ENCODE measurements at regions of chr7 and their contacts with region 1.

Region 1: DNA sequence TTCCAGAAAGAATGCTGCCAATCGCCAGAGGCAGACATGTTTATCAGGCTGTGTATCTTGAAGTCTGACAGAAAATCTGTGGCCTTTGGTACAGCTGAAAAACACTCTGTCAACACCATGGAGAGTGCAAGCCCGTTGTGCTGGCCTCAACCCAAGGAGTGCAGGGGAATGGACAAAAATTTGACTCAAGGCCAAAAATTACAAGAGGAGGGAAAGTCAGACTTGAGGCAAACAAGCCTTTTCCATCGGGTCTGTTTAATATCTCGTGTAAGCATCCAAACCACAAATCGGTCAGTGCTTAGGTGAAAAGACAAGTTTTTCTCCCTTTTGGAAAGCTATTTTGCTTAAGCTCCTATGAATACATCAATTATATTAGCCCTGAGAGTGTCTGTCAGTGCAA is 305.3 kb upstream of the NFE2L3 start:
- DNase-seq: peak; percentile 64 to 95

Region 2: DNA sequence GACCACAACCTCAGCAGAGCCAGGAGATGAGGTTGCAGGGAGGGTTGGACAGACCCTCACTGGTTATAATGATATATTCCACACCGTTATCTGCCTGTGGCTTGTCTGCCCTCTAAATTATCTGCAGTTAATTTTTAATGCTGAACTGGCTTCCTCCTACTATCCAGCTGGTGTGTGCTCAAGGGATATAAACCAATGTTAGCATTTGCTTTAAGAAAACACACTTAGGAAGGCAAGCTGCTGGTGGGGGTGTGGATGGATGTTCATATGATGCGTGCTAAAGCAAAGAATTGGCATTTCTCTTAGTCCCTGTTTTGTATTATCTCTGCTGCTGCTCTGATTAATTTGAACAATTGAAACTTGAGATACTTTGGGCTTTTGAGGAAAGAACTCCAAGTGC is 486.3 kb before region 1 on chr7:
- in situ Hi-C with region 1: no loop called
- DNase-seq: no peak

Region 3: DNA sequence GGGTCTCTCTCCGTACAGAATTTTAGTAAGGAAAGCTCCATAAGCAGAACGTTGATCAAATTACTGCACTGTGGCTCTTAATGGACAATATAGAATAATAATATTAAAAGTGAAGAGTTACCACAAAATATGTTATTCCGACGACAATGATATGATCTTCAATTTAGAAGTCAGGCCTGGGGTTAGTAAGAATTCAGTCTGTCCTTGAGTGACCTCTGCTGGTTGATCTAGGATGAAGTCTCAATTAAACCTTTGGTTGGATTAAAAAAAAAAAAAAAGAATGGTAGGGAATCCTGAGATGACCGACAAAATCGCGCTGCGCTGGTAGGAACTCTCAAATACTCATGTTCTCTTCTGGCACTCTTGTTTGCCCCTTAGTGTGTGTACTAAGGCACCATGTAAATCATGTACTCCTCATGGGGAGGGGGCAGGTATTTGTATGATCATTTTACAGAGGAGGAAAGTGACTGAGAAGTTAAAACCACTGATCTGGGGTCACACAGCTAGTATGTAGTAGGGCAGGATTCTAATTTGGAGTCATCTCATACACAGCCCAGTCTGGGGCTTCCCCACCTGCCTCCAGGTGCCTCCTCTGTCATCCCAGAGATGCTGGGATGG is 457.1 kb before region 1 on chr7:
- in situ Hi-C with region 1: loop called (anchors 25 kb)
- DNase-seq: peak; percentile 11 to 77

Region 4: DNA sequence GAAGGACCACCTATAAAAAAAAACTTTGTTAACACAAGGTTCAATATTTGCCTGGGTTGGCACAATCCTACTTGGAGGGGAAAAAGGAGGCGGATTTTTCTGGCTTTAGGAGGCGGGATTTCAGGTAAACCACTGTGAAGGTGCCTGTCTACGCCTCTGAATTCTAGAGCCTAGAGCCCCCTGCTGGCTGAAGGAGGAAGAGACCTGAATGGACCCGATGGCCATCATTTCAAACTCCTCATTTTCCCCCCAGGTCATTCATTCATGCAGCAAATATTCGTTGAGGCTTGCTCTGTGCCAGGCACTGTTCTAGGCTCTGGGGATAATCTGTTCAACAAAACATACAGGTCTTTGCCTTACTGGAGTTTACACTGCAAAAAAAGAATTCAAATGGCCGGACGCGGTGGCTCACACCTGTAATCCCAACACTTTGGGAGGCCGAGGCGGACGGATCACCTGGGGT is 215.0 kb after region 1 on chr7:
- in situ Hi-C with region 1: no loop called
- DNase-seq: peak; percentile 77 to 90

Measured in T47D (cell line).